ENCODE measurements at regions of chr5 and their contacts with region 1.

Region 1: DNA sequence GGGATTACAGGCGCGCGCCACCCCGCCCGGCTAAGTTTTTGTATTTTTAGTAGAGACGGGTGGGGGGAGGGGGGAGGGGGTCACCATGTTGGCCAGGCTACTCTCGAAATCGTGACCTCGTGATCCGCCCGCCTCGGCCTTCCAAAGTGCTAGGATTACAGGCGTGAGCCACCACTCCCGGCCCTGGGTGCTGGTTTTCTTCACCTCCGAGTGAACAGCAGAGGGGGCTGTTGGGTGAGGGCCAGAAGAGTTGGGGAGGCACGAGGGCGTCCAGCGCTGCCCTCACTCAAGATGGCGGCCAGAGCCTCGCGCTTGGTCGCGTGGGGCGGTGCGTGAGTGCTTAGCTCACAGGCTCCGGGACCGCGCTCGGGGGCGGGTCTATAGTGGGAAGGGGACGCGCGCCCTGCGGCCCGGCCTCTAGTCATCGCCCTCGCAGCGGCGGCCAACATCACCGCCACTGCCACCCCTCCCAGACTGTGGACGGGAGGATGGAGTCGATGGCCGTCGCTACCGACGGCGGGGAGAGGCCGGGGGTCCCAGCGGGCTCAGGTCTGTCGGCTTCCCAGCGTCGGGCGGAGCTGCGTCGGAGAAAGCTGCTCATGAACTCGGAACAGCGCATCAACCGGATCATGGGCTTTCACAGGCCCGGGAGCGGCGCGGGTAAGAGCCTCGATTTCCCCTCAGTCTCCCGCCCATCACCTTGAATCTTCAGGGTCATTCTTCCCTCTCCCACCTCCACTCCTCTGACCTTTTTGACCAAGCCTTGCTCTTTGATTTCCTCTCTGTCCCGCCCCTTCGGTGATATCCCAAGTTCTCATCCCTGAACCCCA is at the start of gene CAMLG:
- DNase-seq: peak; percentile 99
- ATAC-seq: peak; percentile 97
- H3K4me3 Mint-ChIP-seq: peak within 1 kb of the TSS; percentile 94
- H3K27ac Mint-ChIP-seq: peak within 1 kb of the TSS; percentile 95
- H3K4me1 Mint-ChIP-seq: peaks cover 27% of the 10 kb centered on the region
- H3K27me3 Mint-ChIP-seq: no peaks in the 10 kb centered on the region
- total RNA-seq, gene CAMLG: 19.8 to 35.2 TPM

Region 2: DNA sequence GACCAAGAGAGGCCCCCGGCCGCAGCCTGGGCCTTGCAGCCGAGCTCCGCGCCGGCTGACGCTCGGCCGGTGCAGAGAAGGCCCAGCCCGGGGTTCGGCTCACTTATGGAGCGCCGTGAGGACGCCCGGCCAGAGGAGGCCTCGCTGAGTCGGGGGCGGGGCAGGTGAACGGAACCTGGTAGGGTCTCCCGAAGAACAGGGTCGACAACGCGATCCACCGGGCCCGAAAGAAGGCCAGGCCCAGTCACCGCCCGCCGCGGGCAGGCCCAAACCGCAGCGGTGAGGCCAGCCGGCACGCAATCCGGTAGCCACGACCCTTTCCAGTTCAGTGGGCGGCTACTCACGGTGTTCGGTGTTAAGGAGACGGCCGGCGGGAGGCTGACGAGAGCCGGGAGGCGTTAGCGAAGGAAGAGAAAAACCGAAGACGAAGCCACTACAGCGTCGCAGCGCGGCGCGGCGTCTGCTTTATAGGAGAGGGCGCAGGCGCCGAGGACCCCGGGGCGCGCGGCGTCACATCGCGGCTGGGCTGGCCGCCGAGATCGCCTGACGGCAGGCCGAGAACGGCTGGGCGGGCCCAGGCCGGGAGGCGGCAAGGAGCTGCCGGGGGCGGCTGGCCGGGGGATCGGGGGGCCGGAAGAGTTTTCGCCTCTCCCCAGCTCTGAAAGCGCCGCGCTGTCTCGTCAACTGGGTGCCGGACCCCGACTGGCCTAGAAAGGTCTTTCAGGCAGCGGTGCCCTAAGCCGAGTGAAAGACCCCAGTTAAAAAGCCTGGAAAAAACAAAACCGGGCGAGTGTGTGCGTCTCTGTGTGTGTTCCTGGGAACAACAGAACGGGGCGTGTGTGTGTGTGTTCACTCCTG is 561.6 kb before region 1 on chr5 and contains the start of gene SKP1:
- CTCF ChIA-PET with region 1: interaction called, 3 read pairs
- POLR2A ChIA-PET with region 1: no interaction called
- intact Hi-C with region 1: loop called in 1 of 2 experiments (anchors 2 kb)
- DNase-seq: peak; percentile 91
- ATAC-seq: peak; percentile 85
- H3K4me3 Mint-ChIP-seq: peak within 1 kb of the TSS; percentile 98
- H3K27ac Mint-ChIP-seq: peak within 1 kb of the TSS; percentile 95
- H3K4me1 Mint-ChIP-seq: peaks cover 32% of the 10 kb centered on the region
- H3K27me3 Mint-ChIP-seq: no peaks in the 10 kb centered on the region
- total RNA-seq, gene SKP1: 218 to 265 TPM

Region 3: DNA sequence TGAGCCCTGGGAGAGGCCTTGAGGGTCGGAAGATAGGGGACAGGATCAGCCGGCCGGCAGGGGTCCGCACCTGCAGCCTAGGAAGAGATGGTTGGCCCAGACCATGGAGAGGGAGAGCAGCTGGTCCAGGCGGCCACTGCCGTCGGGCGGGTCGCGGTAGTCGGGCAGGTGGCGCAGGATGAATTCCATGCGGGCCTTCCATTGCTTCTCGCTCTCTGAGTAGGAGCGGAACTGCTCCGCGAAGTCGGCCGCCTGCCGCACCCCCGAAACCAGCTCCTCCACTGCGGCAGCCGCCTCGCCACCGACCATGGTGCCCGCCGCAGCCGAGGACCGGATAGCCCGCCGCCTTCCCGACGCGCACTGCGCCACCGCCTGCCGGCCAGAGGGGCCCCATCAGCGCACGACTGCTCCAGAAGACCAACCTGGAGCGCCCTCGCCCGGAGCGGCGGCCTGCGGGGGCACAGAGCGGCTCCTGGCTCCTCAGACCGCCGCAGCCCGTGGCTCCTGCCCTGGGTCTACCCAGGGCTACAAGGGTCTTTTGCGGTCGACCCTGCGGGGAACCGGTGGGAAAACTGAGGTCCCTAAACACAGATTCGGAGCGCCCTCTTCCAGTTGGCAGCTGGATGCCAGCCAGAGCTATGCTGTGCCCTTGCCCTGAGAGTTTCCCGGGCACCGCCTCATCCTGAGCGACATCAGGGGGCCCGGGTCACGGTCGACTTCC is 326.6 kb before region 1 on chr5 and contains the start of gene CDKN2AIPNL:
- CTCF ChIA-PET with region 1: no interaction called
- POLR2A ChIA-PET with region 1: no interaction called
- intact Hi-C with region 1: loop called in 1 of 2 experiments (anchors 5 kb)
- DNase-seq: peak; percentile 95
- ATAC-seq: peak; percentile 100
- H3K4me3 Mint-ChIP-seq: peak within 1 kb of the TSS; percentile 96
- H3K27ac Mint-ChIP-seq: peak within 1 kb of the TSS; percentile 92
- H3K4me1 Mint-ChIP-seq: peaks cover 35% of the 10 kb centered on the region
- H3K27me3 Mint-ChIP-seq: no peaks in the 10 kb centered on the region
- total RNA-seq, gene CDKN2AIPNL: 36.1 to 42.0 TPM

Region 4: GRCh38 chr5:134603059-134603458 is 135.3 kb before region 1 on chr5:
- CTCF ChIA-PET with region 1: no interaction called
- POLR2A ChIA-PET with region 1: no interaction called
- intact Hi-C with region 1: loop called in 1 of 2 experiments (anchors 5 kb)
- DNase-seq: no peak
- ATAC-seq: peak; percentile 91
- H3K4me3 Mint-ChIP-seq: peak overlapping the region; percentile 10
- H3K27ac Mint-ChIP-seq: peak overlapping the region; percentile 25
- H3K4me1 Mint-ChIP-seq: peaks cover 54% of the 10 kb centered on the region
- H3K27me3 Mint-ChIP-seq: no peaks in the 10 kb centered on the region

Region 5: DNA sequence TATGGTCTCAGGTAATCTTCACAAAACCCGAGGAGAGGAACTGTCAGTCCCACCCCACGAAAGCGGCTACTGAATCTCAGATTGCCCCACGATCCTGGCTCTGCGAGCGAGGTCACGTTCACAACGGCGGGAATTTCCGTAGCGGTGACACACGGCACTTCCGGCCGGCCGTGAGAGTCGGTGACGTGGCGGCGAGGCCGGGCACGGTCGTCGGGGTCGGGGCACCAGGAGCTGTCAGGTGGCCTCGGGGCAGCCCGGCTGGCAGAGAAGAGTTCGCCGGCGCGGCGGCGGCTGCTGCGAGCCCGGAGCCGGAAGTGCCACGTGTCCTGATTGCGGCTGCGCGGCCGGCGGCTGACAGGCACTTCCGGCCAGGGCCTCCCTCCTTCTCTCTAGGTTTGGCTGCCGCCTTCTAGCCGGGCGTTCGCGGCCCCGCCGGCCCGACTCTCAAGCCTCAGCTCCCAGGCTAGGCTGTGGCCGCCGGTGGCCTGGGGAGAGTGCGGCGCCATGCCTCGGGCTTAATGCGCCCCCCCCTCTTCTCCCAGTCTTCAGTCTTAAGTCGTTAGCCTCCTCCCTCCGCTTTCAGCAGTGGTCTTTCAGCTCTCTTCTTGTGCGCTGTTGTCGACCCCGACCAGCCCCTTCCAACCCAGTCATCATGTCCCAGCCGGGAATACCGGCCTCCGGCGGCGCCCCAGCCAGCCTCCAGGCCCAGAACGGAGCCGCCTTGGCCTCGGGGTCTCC is 89.8 kb before region 1 on chr5 and contains the start of gene SEC24A:
- CTCF ChIA-PET with region 1: no interaction called
- POLR2A ChIA-PET with region 1: no interaction called
- intact Hi-C with region 1: loop called in 1 of 2 experiments (anchors 1 kb)
- DNase-seq: peak; percentile 96
- ATAC-seq: peak; percentile 88
- H3K4me3 Mint-ChIP-seq: peak within 1 kb of the TSS; percentile 87
- H3K27ac Mint-ChIP-seq: peak within 1 kb of the TSS; percentile 99
- H3K4me1 Mint-ChIP-seq: peaks cover 30% of the 10 kb centered on the region
- H3K27me3 Mint-ChIP-seq: no peaks in the 10 kb centered on the region
- total RNA-seq, gene SEC24A: 32.2 to 41.3 TPM

Region 6: DNA sequence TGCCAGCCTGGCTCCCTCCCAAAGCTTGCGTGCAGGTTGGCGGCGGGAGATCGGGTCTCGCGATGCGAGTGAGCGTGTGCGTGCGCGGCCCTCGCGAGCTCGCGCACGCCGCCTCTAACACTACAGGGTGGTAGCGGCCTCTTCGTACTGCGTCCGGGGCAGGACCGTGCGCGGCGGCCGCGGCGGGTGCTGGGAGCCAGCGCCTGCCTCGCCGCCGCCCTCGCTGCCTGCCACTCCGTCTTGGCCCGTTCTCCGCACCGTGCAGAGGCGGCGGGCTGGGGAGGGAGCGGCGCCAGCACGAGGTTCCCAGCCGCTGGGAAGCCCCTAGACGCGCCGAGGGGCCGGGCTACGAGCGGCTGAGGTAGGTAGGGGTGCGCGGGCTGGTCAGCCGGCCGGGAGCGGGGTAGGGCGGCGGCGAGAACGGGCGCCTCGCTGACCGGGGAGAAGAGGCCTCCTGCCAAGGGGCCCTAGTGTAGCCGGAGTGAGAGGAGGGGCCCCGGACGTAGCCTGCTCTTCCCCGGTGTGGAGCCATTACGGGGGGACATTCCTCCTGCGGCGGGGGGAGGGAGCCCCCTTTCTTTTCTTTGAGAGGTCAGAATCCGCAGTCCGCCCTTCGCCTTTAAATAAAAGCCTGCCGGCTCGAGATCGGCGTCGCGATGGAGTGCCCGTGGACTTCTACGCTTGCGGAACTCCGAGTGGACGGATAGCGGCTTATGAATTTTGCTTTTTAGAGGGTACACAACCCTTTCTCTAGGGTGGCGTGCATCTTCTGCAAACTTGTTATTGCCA is 107.7 kb after region 1 on chr5 and contains the start of gene C5orf24:
- CTCF ChIA-PET with region 1: interaction called, 5 read pairs
- POLR2A ChIA-PET with region 1: interaction called, 11 read pairs
- intact Hi-C with region 1: loop called (anchors 1 kb)
- DNase-seq: peak; percentile 96
- ATAC-seq: peak; percentile 95
- H3K4me3 Mint-ChIP-seq: peak within 1 kb of the TSS; percentile 95
- H3K27ac Mint-ChIP-seq: peak within 1 kb of the TSS; percentile 97
- H3K4me1 Mint-ChIP-seq: peaks cover 29% of the 10 kb centered on the region
- H3K27me3 Mint-ChIP-seq: no peaks in the 10 kb centered on the region
- total RNA-seq, gene C5orf24: 24.5 to 24.9 TPM

Region 7: DNA sequence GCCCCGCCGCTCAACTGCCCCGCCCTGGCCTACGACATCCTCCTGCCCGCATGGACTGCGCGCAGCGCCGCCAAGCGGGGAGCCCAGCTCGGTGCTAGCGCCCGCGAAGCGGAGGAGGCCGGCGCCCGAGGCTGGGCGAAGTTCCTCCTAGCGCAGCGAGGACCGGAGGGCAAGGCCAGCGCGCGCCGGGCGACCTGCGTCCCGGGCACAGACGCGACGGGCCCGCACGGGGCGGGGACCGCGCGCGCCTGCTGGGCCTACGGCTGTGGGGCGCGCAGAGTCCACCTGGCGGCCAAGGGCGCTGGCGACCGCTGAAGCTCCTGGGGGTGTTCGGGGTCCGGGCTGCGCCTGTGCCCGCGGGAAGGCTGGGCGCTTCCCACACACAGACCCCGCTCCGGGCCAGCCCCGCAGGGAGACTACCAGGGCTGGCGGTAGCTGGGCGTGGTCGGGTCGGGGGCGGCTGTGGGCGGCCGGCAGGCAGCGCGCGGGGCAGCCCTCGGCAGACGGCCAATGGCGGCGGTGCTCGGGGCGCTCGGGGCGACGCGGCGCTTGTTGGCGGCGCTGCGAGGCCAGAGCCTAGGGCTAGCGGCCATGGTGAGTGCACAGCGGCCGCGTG is 166.4 kb after region 1 on chr5 and contains the start of gene PCBD2:
- CTCF ChIA-PET with region 1: interaction called, 5 read pairs
- POLR2A ChIA-PET with region 1: interaction called, 7 read pairs
- intact Hi-C with region 1: loop called (anchors 1 kb)
- DNase-seq: peak; percentile 97
- ATAC-seq: peak; percentile 89
- H3K4me3 Mint-ChIP-seq: peak within 1 kb of the TSS; percentile 95
- H3K27ac Mint-ChIP-seq: peak within 1 kb of the TSS; percentile 98
- H3K4me1 Mint-ChIP-seq: peaks cover 17% of the 10 kb centered on the region
- H3K27me3 Mint-ChIP-seq: no peaks in the 10 kb centered on the region
- total RNA-seq, gene PCBD2: 10.0 to 12.8 TPM